ENCODE measurements at regions of chr7 and their contacts with region 1.

Region 1: GRCh38 chr7:28052933-28053332 is 127.7 kb downstream of the JAZF1 start:
- DNase-seq: no peak
- H3K4me3 Mint-ChIP-seq: no peak overlapping the region
- H3K27ac Mint-ChIP-seq: no peak overlapping the region
- H3K4me1 Mint-ChIP-seq: peaks cover 8% of the 10 kb centered on the region
- H3K27me3 Mint-ChIP-seq: peaks cover 1% of the 10 kb centered on the region

Region 2: DNA sequence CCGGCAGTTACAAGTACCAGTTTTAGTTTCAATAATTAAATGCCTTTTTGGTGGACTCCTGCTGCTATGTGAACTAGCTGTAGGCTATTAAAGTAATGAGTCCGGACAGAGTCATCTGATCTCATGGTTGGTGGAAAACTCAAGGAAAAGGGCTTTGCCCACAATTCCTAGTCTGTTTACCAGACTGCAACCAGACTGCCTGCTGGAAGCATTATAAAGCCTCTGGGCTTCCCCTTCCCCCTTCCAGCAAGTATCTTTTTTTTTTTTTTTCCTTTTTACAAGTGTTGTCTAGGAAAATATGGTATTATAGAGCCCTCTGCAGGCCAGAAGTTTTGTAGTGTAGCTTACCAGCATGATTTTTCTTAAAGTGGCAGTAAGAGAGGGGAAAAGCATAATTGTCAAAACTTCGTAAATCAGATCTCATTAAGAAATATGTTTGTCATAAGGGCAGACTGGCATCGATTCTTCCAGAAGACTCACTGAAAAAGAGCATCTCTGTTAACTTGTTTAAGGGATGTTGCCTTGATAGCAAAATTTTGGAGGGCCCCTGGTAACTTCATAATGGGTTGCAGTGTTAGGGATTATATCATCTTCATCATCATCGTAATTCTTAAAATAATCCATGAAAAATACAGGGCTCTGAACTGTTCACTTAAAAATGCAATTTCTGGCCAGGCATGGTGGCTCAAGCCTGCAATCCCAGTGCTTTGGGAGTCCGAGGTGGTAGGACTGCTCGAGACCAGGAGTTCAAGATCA is 131.7 kb before region 1 on chr7:
- CTCF ChIA-PET with region 1: no interaction called
- POLR2A ChIA-PET with region 1: no interaction called
- intact Hi-C with region 1: no loop called
- DNase-seq: no peak
- H3K4me3 Mint-ChIP-seq: no peak overlapping the region
- H3K27ac Mint-ChIP-seq: no peak overlapping the region
- H3K4me1 Mint-ChIP-seq: no peaks in the 10 kb centered on the region
- H3K27me3 Mint-ChIP-seq: no peaks in the 10 kb centered on the region

Region 3: GRCh38 chr7:28078036-28078901 is 25.3 kb after region 1 on chr7:
- CTCF ChIA-PET with region 1: interaction called, 16 read pairs
- POLR2A ChIA-PET with region 1: no interaction called
- intact Hi-C with region 1: no loop called
- DNase-seq: peak; percentile 60
- H3K4me3 Mint-ChIP-seq: no peak overlapping the region
- H3K27ac Mint-ChIP-seq: no peak overlapping the region
- H3K4me1 Mint-ChIP-seq: peaks cover 5% of the 10 kb centered on the region
- H3K27me3 Mint-ChIP-seq: no peaks in the 10 kb centered on the region

Measured in activated CD4-positive, alpha-beta memory T cell treated with anti-CD3 and anti-CD28 coated beads for 36 hours (primary cell).